Dorsolateral prefrontal cortex (tissue), 120 donors: ENCODE measurements at regions of chr5 and their contacts with region 1.

Region 1: DNA sequence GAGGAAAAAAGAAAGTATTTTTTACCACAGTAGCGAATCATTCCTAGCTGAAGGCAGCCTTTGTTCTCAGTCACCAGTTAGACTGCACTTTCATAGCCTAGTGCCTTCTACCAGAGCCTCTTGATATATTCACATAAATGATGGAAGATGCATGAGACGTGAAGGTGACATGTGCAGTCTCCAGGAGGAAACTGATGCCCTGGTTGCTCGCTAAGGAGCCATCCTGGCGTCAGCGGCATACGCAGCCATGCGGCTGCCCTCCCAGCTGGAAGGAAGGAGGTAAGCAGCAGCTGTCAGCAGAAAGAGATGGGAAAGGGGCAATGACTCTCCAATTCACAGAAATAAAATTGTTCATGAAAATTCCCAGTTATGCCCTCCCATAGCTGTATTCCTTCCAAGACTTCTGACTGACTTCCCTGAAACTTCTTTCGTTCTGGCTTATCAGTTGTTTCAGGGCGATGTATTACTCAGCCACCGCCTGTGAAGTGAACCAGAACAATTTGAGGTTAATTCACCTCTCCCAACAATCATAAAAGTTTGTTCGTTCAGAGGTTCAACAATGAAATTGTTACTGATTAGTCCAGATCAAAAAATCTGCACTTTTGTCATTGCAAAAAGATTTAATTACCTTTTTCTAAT is 331.2 kb downstream of the NR2F1-AS1 start:
- DNase-seq: no peak
- H3K4me3 ChIP-seq: peak overlapping the region in 56 of 59 donors; percentile 4 to 61 (median 32)
- H3K27ac ChIP-seq: peak overlapping the region in 14 of 59 donors; percentile 0 to 71 (median 35)
- H3K27me3 ChIP-seq: no peaks in the 10 kb centered on the region
- CTCF ChIP-seq: no peak

Region 2: DNA sequence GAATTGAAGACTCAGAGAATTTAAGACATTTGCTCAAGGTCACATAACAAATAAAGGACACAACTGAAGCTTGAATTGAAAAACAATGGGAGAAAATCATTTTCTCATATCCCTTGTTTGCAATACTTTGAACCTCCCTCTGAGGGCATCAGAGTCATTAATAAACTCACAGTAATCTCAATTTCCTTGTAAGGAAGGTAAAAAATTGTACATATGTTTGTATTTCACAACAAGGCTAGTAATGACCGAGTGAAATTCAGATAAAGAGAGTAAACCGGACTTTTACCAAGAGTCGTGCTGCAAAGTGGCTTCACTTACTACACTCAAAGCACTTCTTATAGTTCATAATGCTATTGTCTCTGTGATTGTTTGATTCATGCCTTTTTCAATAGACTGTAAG is 333.7 kb before region 1 on chr5:
- intact Hi-C with region 1: loop called in 1 of 2 experiments (anchors 10 kb)
- DNase-seq: no peak
- H3K4me3 ChIP-seq: no peak overlapping the region
- H3K27ac ChIP-seq: no peak overlapping the region
- H3K27me3 ChIP-seq: no peaks in the 10 kb centered on the region
- CTCF ChIP-seq: peak in 52 of 56 donors; percentile 13 to 72 (median 44)

Region 3: DNA sequence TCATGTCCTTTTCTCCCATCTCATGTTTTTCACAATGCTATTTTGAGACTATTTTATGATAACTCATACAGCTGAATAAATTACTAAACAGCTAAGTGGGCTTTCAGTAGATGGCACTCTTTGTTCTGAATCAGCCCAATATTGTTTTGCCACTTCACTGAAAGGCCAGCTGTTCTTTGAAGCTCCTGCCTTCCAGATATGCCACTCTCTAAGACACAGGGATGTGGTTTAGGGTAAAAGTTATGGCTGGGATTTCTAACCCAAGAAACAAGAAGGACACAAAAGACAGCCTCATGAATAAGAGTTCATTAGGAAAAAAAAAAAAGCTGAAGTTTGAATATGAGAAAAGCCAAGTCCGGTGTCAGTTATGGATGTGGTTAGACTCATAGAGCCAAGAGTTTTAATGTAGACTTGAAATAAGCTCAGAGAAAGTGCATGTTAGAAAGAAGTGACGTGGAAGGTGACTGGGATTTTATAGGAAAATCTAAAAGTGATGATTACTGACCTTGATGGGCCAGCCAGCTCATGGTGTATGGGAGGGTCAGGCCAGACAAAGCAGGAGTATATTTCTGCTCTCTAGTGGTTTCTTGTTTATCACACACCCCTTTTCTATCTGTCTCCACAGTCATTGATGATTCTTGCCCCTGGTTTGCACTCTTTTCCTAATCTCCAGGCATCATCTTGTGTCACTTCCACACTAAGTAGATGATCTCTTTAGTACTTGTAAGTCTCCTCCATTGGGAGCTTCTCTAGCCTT is 157.2 kb before region 1 on chr5:
- intact Hi-C with region 1: no loop called
- DNase-seq: no peak
- H3K4me3 ChIP-seq: no peak overlapping the region
- H3K27ac ChIP-seq: peak overlapping the region in 6 of 59 donors; percentile 6 to 32 (median 26)
- H3K27me3 ChIP-seq: no peaks in the 10 kb centered on the region
- CTCF ChIP-seq: peak in 50 of 56 donors; percentile 12 to 59 (median 34)